Aorta (tissue), 5 donors: ENCODE measurements at regions of chr13 and their contacts with region 1.

Region 1: GRCh38 chr13:74133657-74134201 is 475 bp downstream of the KLF12 start:
- DNase-seq: peak; percentile 91 to 92
- ATAC-seq: peak; percentile 84
- H3K4me3 ChIP-seq: peak overlapping the region; percentile 88 to 95
- H3K27ac ChIP-seq: peak overlapping the region; percentile 75 to 80
- H3K4me1 ChIP-seq: peaks cover 2 to 3% of the 10 kb centered on the region in 2 donors
- H3K27me3 ChIP-seq: no peaks in the 10 kb centered on the region

Region 2: DNA sequence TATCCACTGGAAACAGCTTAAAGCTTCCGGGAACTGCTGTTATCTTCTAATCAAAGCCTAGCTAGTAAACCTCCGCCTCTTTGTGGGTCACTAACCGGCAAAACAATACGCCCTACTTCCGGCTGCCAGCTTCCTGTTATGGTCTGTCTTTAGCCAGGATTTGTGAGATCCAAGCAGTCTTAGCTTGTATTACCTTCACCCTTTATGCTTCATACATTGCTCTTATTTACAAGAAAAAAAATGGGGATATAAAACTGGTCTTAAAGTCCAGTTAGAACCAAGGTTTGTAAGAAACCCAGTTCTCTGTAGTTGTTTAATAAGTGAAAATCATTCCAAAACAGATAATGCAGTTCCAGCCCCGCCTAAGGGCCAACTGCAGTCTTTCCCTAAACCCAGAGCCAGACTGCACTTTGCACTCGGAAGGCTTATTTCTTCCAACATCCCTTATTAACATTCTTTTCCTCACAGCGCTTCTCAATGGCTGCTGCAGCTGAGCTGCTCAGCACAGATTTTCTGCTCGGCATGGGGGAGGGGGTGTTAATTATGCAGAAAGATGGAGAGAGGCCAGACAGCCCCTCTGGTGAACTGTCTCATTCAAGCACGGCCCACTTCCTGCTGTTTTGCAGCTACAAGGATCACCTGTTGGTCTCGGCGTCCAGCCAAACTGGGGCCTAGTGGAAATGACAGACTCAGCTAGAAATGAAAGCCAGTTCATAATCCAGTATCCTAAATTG is 367.9 kb before region 1 on chr13:
- intact Hi-C with region 1: loop called (anchors 10 kb)
- DNase-seq: peak; percentile 86
- ATAC-seq: peak; percentile 76
- H3K4me3 ChIP-seq: no peak overlapping the region
- H3K27ac ChIP-seq: peak overlapping the region; percentile 61 to 78
- H3K4me1 ChIP-seq: peaks cover 8 to 11% of the 10 kb centered on the region in 2 donors
- H3K27me3 ChIP-seq: no peaks in the 10 kb centered on the region

Region 3: DNA sequence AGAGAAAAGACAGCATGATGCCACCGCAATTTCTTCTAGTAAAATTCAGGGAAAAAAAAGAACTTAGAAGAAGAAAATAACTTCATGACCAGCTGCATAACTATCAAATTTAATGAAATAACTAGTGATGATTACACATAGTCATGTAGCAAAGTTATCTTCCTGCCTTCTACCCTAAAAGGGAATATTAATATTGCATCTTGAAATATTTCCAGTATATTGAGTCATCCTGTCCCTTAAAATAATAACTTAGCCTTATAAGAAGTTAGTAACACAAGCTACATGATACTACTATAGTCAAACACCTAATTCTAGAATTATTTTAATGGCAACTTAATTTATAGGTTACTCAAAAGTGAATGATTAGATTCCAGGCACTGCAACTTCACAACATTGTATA is 288.7 kb before region 1 on chr13:
- intact Hi-C with region 1: loop called in 1 of 2 experiments (anchors 5 kb)
- DNase-seq: no peak
- ATAC-seq: no peak
- H3K4me3 ChIP-seq: no peak overlapping the region
- H3K27ac ChIP-seq: no peak overlapping the region
- H3K4me1 ChIP-seq: peaks cover 0 to 1% of the 10 kb centered on the region in 2 donors
- H3K27me3 ChIP-seq: no peaks in the 10 kb centered on the region

Region 4: DNA sequence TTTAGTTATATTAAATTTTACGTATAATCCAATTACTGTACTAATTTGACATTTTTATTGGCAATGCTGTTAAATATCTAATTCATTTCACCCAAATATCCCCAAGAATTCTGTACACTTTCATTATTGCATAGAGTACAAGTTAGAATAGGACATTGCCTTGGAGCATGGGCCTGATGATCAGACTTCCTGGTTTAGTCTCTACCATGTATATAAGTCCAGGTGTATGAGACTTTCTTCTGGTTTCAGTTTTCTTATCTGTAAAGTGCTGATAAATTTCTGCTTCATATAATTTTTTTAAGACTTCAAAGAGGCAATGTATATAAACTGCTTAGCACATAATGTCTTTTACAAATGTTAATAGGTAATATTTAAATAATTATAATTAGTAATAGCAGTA is 178.9 kb before region 1 on chr13:
- intact Hi-C with region 1: loop called in 1 of 2 experiments (anchors 5 kb)
- DNase-seq: no peak
- ATAC-seq: no peak
- H3K4me3 ChIP-seq: no peak overlapping the region
- H3K27ac ChIP-seq: no peak overlapping the region
- H3K4me1 ChIP-seq: peaks cover 2 to 9% of the 10 kb centered on the region in 2 donors
- H3K27me3 ChIP-seq: no peaks in the 10 kb centered on the region

Region 5: GRCh38 chr13:74052402-74052928 is 81.3 kb before region 1 on chr13:
- intact Hi-C with region 1: loop called in 1 of 2 experiments (anchors 5 kb)
- DNase-seq: peak; percentile 73 to 87
- ATAC-seq: no peak
- H3K4me3 ChIP-seq: peak overlapping the region in 1 of 2 donors; percentile 34
- H3K27ac ChIP-seq: peak overlapping the region in 1 of 2 donors; percentile 52
- H3K4me1 ChIP-seq: peaks cover 5 to 7% of the 10 kb centered on the region in 2 donors
- H3K27me3 ChIP-seq: no peaks in the 10 kb centered on the region

Region 6: GRCh38 chr13:74210693-74211393 is 77.1 kb after region 1 on chr13:
- intact Hi-C with region 1: loop called (anchors 2 to 5 kb)
- DNase-seq: peak in 1 of 2 donors; percentile 55
- ATAC-seq: peak; percentile 93
- H3K4me3 ChIP-seq: no peak overlapping the region
- H3K27ac ChIP-seq: peak overlapping the region; percentile 86 to 99
- H3K4me1 ChIP-seq: peaks cover 2 to 6% of the 10 kb centered on the region in 2 donors
- H3K27me3 ChIP-seq: no peaks in the 10 kb centered on the region